ENCODE measurements at regions of chr5 and their contacts with region 1.

Region 1: DNA sequence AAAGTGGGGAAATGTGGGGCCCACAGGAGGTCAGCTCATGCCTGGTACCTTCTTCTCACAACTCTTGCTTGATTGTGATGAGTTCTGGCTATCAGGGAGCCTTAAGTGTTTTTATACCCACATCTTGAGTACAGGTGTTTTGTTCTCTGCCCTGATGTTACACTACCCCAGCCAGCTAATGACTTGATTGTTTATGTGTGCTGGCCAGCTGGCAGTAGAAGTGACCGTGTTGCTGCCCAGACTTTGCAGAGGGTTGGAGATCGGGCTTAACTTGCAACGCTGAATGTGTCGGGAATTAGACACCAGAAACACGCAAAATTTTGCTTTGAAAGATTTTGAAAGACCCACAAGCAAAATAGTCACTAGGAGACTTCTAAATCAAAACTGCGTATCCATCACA is 16.9 kb upstream of the ZDHHC11B start:
- DNase-seq: no peak
- H3K4me3 ChIP-seq: no peak overlapping the region
- H3K4me1 ChIP-seq: no peaks in the 10 kb centered on the region
- H3K27me3 ChIP-seq: no peaks in the 10 kb centered on the region

Region 2: GRCh38 chr5:717143-717542 is 84.3 kb before region 1 on chr5:
- in situ Hi-C with region 1: loop called (anchors 5 kb)
- DNase-seq: no peak
- H3K4me3 ChIP-seq: no peak overlapping the region
- H3K4me1 ChIP-seq: no peaks in the 10 kb centered on the region
- H3K27me3 ChIP-seq: no peaks in the 10 kb centered on the region